Dorsolateral prefrontal cortex (tissue), 120 donors: ENCODE measurements at regions of chr5 and their contacts with region 1.

Region 1: GRCh38 chr5:81856948-81857928 is 106.3 kb upstream of the SSBP2 start:
- DNase-seq: peak; percentile 63 to 98 (median 82)
- H3K4me3 ChIP-seq: peak overlapping the region in 47 of 59 donors; percentile 1 to 53 (median 27)
- H3K27ac ChIP-seq: peak overlapping the region; percentile 5 to 98 (median 80)
- H3K27me3 ChIP-seq: no peaks in the 10 kb centered on the region
- CTCF ChIP-seq: peak in 47 of 56 donors; percentile 8 to 56 (median 34)

Region 2: DNA sequence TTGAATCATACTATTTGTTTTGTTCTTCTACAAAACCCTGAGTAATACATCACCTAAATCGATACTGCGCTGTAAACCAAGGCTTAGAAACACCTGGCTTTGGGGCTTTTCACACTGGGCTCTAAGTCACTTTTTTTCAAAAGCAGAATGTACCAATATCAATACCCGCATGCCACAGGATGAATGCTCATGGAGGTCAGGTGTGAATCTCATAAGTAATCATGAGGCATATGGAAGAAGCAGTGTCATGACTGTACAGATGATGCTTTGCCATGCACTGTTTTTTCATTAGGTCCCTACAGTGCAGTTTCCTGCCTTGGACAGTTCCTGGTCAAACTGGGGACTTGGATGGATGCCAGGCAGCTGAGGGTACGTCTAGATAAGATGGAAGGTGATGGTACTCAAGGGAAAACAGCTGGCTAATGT is 65.6 kb after region 1 on chr5:
- intact Hi-C with region 1: loop called in 1 of 2 experiments (anchors 5 kb)
- DNase-seq: no peak
- H3K4me3 ChIP-seq: no peak overlapping the region
- H3K27ac ChIP-seq: no peak overlapping the region
- H3K27me3 ChIP-seq: no peaks in the 10 kb centered on the region
- CTCF ChIP-seq: no peak